Activated CD8-positive, alpha-beta T cell treated with anti-CD3 and anti-CD28 coated beads for 36 hours (primary cell): ENCODE measurements at regions of chr17 and their contacts with region 1.

Region 1: DNA sequence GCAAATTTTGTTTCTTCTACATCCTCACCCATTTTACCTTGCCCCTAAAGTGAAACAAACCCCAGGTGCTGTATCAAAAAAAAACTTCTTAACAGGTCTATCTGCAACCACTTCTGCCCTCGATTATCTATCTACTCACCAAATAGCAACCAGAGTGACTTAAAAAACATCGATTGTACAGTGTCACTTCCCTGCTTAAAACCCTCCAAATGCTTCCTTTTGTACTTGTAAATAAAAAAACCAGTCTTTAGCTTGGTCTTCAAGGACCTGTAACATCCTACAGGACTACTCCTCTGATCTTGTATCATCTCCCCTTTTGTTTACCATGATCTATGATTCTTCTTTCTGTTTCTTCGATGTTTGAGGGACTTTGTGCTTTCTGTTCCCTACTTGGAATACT is 82.7 kb upstream of the CORO6 start:
- DNase-seq: no peak
- ATAC-seq: no peak
- H3K4me3 Mint-ChIP-seq: peak overlapping the region; percentile 71
- H3K27ac Mint-ChIP-seq: peak overlapping the region; percentile 93
- H3K4me1 Mint-ChIP-seq: peaks cover 45% of the 10 kb centered on the region
- H3K27me3 Mint-ChIP-seq: no peaks in the 10 kb centered on the region
- CTCF ChIP-seq: no peak

Region 2: DNA sequence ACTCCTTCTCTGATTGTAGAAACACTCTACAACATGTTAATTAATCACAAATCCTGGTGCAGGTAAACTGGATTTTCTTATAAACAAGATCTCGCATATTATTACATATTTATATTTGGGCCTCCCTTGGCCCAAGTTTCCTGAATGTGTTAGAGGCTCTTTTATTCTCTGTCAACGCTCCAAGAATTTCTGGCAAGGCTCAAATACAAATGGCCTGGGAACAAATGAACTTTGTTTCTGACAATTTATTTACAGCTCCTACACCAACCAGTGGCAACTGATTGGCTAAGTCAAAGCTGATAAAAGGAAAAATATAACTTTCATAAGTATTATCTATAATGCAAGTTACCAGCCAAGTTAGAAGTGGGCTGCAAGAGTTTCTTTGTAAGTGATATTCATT is 17.8 kb before region 1 on chr17:
- CTCF ChIA-PET with region 1: interaction called, 12 read pairs
- POLR2A ChIA-PET with region 1: interaction called, 14 read pairs
- intact Hi-C with region 1: no loop called
- DNase-seq: no peak
- ATAC-seq: no peak
- H3K4me3 Mint-ChIP-seq: no peak overlapping the region
- H3K27ac Mint-ChIP-seq: peak overlapping the region; percentile 10
- H3K4me1 Mint-ChIP-seq: peaks cover 26% of the 10 kb centered on the region
- H3K27me3 Mint-ChIP-seq: no peaks in the 10 kb centered on the region
- CTCF ChIP-seq: no peak

Region 3: GRCh38 chr17:29693769-29694168 is 11.6 kb before region 1 on chr17:
- CTCF ChIA-PET with region 1: interaction called, 12 read pairs
- POLR2A ChIA-PET with region 1: interaction called, 14 read pairs
- intact Hi-C with region 1: no loop called
- DNase-seq: no peak
- ATAC-seq: no peak
- H3K4me3 Mint-ChIP-seq: no peak overlapping the region
- H3K27ac Mint-ChIP-seq: peak overlapping the region; percentile 76
- H3K4me1 Mint-ChIP-seq: peaks cover 31% of the 10 kb centered on the region
- H3K27me3 Mint-ChIP-seq: no peaks in the 10 kb centered on the region
- CTCF ChIP-seq: no peak

Region 4: DNA sequence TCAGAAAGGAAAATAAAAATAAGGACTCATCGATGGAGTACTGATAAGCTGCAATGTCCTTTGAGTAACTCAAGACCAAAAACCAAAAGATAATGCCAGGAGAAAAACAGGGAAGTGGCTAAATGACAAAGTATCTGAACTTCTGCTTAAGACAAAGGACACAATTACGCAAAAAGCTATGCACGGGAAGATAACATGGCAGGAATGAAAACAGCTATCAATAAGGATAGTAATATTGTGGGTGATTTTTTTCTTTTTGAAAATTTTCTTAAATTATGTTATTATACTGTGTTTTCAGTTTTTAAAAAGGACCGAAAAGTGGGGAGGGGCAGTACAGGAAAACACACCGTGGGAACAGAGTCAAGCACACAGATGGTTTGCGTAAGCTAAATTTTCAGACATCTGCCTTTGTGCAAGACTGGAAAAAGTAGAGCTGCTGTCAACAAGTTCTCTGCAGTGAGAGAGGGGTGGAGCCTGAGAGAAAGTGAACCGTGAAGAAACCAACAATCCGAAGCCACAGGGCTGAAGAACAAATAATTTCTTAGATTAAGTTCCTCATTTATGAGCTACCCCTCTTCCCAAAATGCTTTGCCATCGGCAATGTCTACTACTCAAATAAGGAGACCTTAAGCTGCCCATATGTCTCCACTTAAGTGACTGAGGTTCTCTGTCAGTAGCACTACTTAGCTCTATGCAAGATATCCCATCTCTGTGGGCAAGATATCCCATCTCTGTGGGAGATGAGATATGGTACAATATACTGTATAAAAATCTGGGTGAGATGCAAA is 17.2 kb after region 1 on chr17:
- CTCF ChIA-PET with region 1: interaction called, 10 read pairs
- POLR2A ChIA-PET with region 1: interaction called, 20 read pairs
- intact Hi-C with region 1: no loop called
- DNase-seq: peak; percentile 37
- ATAC-seq: peak; percentile 57
- H3K4me3 Mint-ChIP-seq: peak overlapping the region; percentile 30
- H3K27ac Mint-ChIP-seq: peak overlapping the region; percentile 66
- H3K4me1 Mint-ChIP-seq: peaks cover 77% of the 10 kb centered on the region
- H3K27me3 Mint-ChIP-seq: no peaks in the 10 kb centered on the region
- CTCF ChIP-seq: no peak

Region 5: DNA sequence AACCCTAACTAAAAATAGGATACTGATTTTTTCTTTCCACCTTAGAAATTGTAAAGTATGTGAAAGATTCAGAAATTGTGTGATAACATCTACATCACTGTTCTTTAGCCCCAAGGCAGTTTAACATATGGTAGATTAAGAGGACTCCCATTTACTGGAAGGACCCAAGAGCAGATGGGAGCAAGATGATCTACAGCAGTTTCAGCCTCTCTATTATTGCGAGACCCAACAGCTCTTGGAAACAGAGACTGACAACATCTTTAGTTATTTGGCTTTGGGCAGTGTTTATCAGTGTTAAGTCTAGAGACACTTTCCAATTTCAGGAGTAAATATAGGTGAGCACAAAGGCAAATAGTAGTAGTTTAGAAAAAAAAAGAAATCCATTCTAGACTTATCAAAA is 42.3 kb after region 1 on chr17:
- CTCF ChIA-PET with region 1: no interaction called
- POLR2A ChIA-PET with region 1: interaction called, 12 read pairs
- intact Hi-C with region 1: no loop called
- DNase-seq: no peak
- ATAC-seq: no peak
- H3K4me3 Mint-ChIP-seq: no peak overlapping the region
- H3K27ac Mint-ChIP-seq: peak overlapping the region; percentile 50
- H3K4me1 Mint-ChIP-seq: peaks cover 67% of the 10 kb centered on the region
- H3K27me3 Mint-ChIP-seq: no peaks in the 10 kb centered on the region
- CTCF ChIP-seq: no peak

Region 6: GRCh38 chr17:29941334-29941733 is 235.9 kb after region 1 on chr17 and contains the start of gene EFCAB5:
- CTCF ChIA-PET with region 1: no interaction called
- POLR2A ChIA-PET with region 1: no interaction called
- intact Hi-C with region 1: no loop called
- DNase-seq: no peak
- ATAC-seq: no peak
- H3K4me3 Mint-ChIP-seq: no peak within 1 kb of the TSS
- H3K27ac Mint-ChIP-seq: no peak within 1 kb of the TSS
- H3K4me1 Mint-ChIP-seq: peaks cover 6% of the 10 kb centered on the region
- H3K27me3 Mint-ChIP-seq: no peaks in the 10 kb centered on the region
- CTCF ChIP-seq: no peak
- total RNA-seq, gene EFCAB5: 0.54 to 0.81 TPM